H1 (cell line): ENCODE measurements at regions of chr1 and their contacts with region 1.

Region 1: GRCh38 chr1:160821628-160822027 is 25.7 kb downstream of the LY9 start:
- DNase-seq: peak in 1 of 2 experiments; percentile 76
- H3K4me3 ChIP-seq: no peak overlapping the region
- H3K27ac ChIP-seq: no peak overlapping the region
- H3K4me1 ChIP-seq: peaks cover 0 to 6% (median 2%) of the 10 kb centered on the region in 4 experiments; a peak in 2 of 7 replicates
- H3K27me3 ChIP-seq: no peaks in the 10 kb centered on the region
- CTCF ChIP-seq: peak; percentile 43 to 59 (median 46)
- EP300 ChIP-seq: no peak
- POLR2A ChIP-seq: no peak
- RAD21 ChIP-seq: peak in 1 of 2 experiments; percentile 55; a peak in 3 of 4 replicates

Region 2: GRCh38 chr1:160755461-160755860 is 66.2 kb before region 1 on chr1:
- CTCF ChIA-PET with region 1: no interaction called
- POLR2A ChIA-PET with region 1: no interaction called
- DNase-seq: no peak
- H3K4me3 ChIP-seq: no peak overlapping the region
- H3K27ac ChIP-seq: no peak overlapping the region
- H3K4me1 ChIP-seq: no peaks in the 10 kb centered on the region
- H3K27me3 ChIP-seq: no peaks in the 10 kb centered on the region
- CTCF ChIP-seq: no peak
- EP300 ChIP-seq: no peak
- POLR2A ChIP-seq: no peak
- RAD21 ChIP-seq: no peak

Region 3: GRCh38 chr1:160795951-160796383 is 25.7 kb before region 1 on chr1 and contains the start of gene LY9:
- CTCF ChIA-PET with region 1: interaction called, 13 read pairs
- POLR2A ChIA-PET with region 1: no interaction called
- DNase-seq: no peak
- H3K4me3 ChIP-seq: no peak within 1 kb of the TSS
- H3K27ac ChIP-seq: no peak within 1 kb of the TSS
- H3K4me1 ChIP-seq: no peaks in the 10 kb centered on the region
- H3K27me3 ChIP-seq: no peaks in the 10 kb centered on the region
- CTCF ChIP-seq: no peak
- EP300 ChIP-seq: no peak
- POLR2A ChIP-seq: no peak
- RAD21 ChIP-seq: no peak
- total RNA-seq, gene LY9: not detected in 2 replicates